CD4-positive, alpha-beta T cell (primary cell): ENCODE measurements at regions of chr3 and their contacts with region 1.

Region 1: GRCh38 chr3:58305882-58306711 is at the starts of genes HTD2 and RPP14:
- DNase-seq: peak; percentile 98 to 100 (median 99)
- ATAC-seq: peak; percentile 87
- H3K4me3 ChIP-seq: peak within 1 kb of the TSS; percentile 81
- H3K4me3 Mint-ChIP-seq: peak within 1 kb of the TSS; percentile 97
- H3K27ac ChIP-seq: peak within 1 kb of the TSS; percentile 91 to 98
- H3K27ac Mint-ChIP-seq: peak within 1 kb of the TSS; percentile 98
- H3K4me1 ChIP-seq: peaks cover 31% of the 10 kb centered on the region
- H3K4me1 Mint-ChIP-seq: peaks cover 35% of the 10 kb centered on the region
- H3K27me3 ChIP-seq: peaks cover 8 to 12% of the 10 kb centered on the region in 2 experiments
- H3K27me3 Mint-ChIP-seq: peaks cover 13% of the 10 kb centered on the region
- CTCF ChIP-seq: peak; percentile 93
- total RNA-seq, gene HTD2: 7.2 to 7.3 TPM
- total RNA-seq, gene RPP14: 17.7 to 19.7 TPM

Region 2: DNA sequence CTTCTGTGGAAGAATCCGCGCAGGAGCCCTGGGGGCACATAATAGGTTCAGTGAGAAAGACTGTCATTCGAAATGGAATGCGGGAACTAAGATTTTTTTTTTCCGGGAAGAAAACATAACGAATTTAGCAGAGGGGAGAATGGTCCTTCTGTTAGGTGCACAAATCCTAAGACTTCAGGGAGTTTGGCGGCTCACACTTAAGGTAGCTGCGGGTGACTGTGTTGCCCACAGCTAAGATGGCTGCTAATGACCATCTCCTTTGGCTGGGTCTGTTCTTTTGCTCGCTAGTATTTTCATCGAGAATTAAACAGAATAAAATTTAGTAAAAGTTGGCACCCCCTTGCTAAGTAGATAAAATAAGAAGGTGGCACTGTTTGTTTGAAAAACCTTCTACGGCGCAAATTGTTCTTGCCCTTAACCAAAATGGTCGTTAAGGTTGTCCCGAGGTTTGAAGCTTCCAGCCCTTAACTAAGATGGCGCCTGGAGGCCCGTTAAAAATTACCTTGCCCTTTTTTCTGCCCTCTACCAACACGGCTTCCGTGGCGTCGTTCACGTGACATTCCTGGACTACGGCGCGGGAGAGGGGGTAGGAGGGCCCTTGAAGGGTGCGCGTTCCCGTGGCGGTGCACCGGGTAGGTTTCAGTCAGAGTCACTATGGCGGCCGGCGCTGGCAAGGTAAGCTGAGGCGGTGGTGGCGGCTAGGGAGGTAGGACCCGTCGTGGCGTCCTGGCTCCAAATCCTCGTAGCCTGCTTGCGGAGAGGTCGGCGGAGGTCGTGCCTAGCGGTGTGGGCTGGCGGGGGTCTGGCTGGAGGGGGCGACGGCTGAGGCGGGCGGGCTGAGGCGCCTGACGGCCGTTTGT is 550.2 kb before region 1 on chr3 and contains the start of gene SLMAP:
- CTCF ChIA-PET with region 1: no interaction called
- POLR2A ChIA-PET with region 1: interaction called, 9 read pairs
- intact Hi-C with region 1: loop called in 1 of 2 experiments (anchors 10 kb)
- DNase-seq: peak; percentile 91 to 98 (median 94)
- ATAC-seq: peak; percentile 92
- H3K4me3 ChIP-seq: peak within 1 kb of the TSS; percentile 72
- H3K4me3 Mint-ChIP-seq: peak within 1 kb of the TSS; percentile 97
- H3K27ac ChIP-seq: peak within 1 kb of the TSS; percentile 82 to 87
- H3K27ac Mint-ChIP-seq: peak within 1 kb of the TSS; percentile 97
- H3K4me1 ChIP-seq: peaks cover 33% of the 10 kb centered on the region
- H3K4me1 Mint-ChIP-seq: peaks cover 46% of the 10 kb centered on the region
- H3K27me3 ChIP-seq: no peaks in the 10 kb centered on the region
- H3K27me3 Mint-ChIP-seq: no peaks in the 10 kb centered on the region
- CTCF ChIP-seq: no peak
- total RNA-seq, gene SLMAP: 51.3 to 52.2 TPM

Region 3: DNA sequence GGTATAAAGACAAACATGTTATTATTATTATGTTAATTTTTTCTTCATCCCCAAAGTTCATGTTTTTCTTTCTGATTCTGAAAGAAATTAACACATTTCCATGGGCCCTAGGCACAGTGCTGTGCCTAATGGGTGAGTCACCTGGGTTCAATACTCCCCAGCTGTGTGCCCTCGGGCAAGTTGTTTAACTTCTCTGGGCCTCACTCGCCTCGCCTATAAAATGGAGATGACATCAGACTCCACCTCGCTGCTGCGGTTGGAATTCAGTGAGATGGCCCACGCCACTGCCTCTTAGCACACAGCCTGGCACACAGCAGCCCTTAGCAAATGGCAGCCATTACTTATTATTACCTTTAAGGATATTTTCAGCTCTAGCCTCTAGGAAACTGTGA is 117.9 kb before region 1 on chr3:
- CTCF ChIA-PET with region 1: interaction called, 10 read pairs
- POLR2A ChIA-PET with region 1: interaction called, 3 read pairs
- intact Hi-C with region 1: loop called in 1 of 2 experiments (anchors 2 kb)
- DNase-seq: no peak
- ATAC-seq: no peak
- H3K4me3 ChIP-seq: no peak overlapping the region
- H3K4me3 Mint-ChIP-seq: no peak overlapping the region
- H3K27ac ChIP-seq: no peak overlapping the region
- H3K27ac Mint-ChIP-seq: no peak overlapping the region
- H3K4me1 ChIP-seq: peaks cover 5% of the 10 kb centered on the region
- H3K4me1 Mint-ChIP-seq: no peaks in the 10 kb centered on the region
- H3K27me3 ChIP-seq: no peaks in the 10 kb centered on the region
- H3K27me3 Mint-ChIP-seq: no peaks in the 10 kb centered on the region
- CTCF ChIP-seq: no peak

Region 4: GRCh38 chr3:58217209-58217811 is 88.8 kb before region 1 on chr3:
- CTCF ChIA-PET with region 1: no interaction called
- POLR2A ChIA-PET with region 1: no interaction called
- intact Hi-C with region 1: no loop called
- DNase-seq: peak; percentile 21 to 80 (median 43)
- ATAC-seq: peak; percentile 93
- H3K4me3 ChIP-seq: no peak overlapping the region
- H3K4me3 Mint-ChIP-seq: no peak overlapping the region
- H3K27ac ChIP-seq: no peak overlapping the region
- H3K27ac Mint-ChIP-seq: no peak overlapping the region
- H3K4me1 ChIP-seq: peaks cover 6% of the 10 kb centered on the region
- H3K4me1 Mint-ChIP-seq: peaks cover 6% of the 10 kb centered on the region
- H3K27me3 ChIP-seq: no peaks in the 10 kb centered on the region
- H3K27me3 Mint-ChIP-seq: no peaks in the 10 kb centered on the region
- CTCF ChIP-seq: peak; percentile 76

Region 5: GRCh38 chr3:58260261-58260731 is 45.8 kb before region 1 on chr3:
- CTCF ChIA-PET with region 1: no interaction called
- POLR2A ChIA-PET with region 1: no interaction called
- intact Hi-C with region 1: no loop called
- DNase-seq: peak in 3 of 14 experiments; percentile 9 to 37 (median 10)
- ATAC-seq: no peak
- H3K4me3 ChIP-seq: no peak overlapping the region
- H3K4me3 Mint-ChIP-seq: no peak overlapping the region
- H3K27ac ChIP-seq: no peak overlapping the region
- H3K27ac Mint-ChIP-seq: no peak overlapping the region
- H3K4me1 ChIP-seq: no peaks in the 10 kb centered on the region
- H3K4me1 Mint-ChIP-seq: no peaks in the 10 kb centered on the region
- H3K27me3 ChIP-seq: no peaks in the 10 kb centered on the region
- H3K27me3 Mint-ChIP-seq: no peaks in the 10 kb centered on the region
- CTCF ChIP-seq: no peak

Region 6: GRCh38 chr3:58332575-58333188 is 26.6 kb after region 1 on chr3 and contains the start of gene PXK:
- CTCF ChIA-PET with region 1: interaction called, 37 read pairs
- POLR2A ChIA-PET with region 1: interaction called, 36 read pairs
- intact Hi-C with region 1: loop called (anchors 1 to 2 kb)
- DNase-seq: peak; percentile 55 to 88 (median 72)
- ATAC-seq: peak; percentile 90
- H3K4me3 ChIP-seq: peak within 1 kb of the TSS; percentile 61
- H3K4me3 Mint-ChIP-seq: peak within 1 kb of the TSS; percentile 99
- H3K27ac ChIP-seq: no peak within 1 kb of the TSS
- H3K27ac Mint-ChIP-seq: peak within 1 kb of the TSS; percentile 73
- H3K4me1 ChIP-seq: peaks cover 23% of the 10 kb centered on the region
- H3K4me1 Mint-ChIP-seq: peaks cover 39% of the 10 kb centered on the region
- H3K27me3 ChIP-seq: no peaks in the 10 kb centered on the region
- H3K27me3 Mint-ChIP-seq: no peaks in the 10 kb centered on the region
- CTCF ChIP-seq: no peak
- total RNA-seq, gene PXK: 12.5 to 14.8 TPM

Region 7: GRCh38 chr3:58422756-58423325 is 116.7 kb after region 1 on chr3:
- CTCF ChIA-PET with region 1: no interaction called
- POLR2A ChIA-PET with region 1: no interaction called
- intact Hi-C with region 1: no loop called
- DNase-seq: no peak
- ATAC-seq: no peak
- H3K4me3 ChIP-seq: no peak overlapping the region
- H3K4me3 Mint-ChIP-seq: no peak overlapping the region
- H3K27ac ChIP-seq: no peak overlapping the region
- H3K27ac Mint-ChIP-seq: peak overlapping the region; percentile 41
- H3K4me1 ChIP-seq: no peaks in the 10 kb centered on the region
- H3K4me1 Mint-ChIP-seq: no peaks in the 10 kb centered on the region
- H3K27me3 ChIP-seq: no peaks in the 10 kb centered on the region
- H3K27me3 Mint-ChIP-seq: no peaks in the 10 kb centered on the region
- CTCF ChIP-seq: no peak

Region 8: DNA sequence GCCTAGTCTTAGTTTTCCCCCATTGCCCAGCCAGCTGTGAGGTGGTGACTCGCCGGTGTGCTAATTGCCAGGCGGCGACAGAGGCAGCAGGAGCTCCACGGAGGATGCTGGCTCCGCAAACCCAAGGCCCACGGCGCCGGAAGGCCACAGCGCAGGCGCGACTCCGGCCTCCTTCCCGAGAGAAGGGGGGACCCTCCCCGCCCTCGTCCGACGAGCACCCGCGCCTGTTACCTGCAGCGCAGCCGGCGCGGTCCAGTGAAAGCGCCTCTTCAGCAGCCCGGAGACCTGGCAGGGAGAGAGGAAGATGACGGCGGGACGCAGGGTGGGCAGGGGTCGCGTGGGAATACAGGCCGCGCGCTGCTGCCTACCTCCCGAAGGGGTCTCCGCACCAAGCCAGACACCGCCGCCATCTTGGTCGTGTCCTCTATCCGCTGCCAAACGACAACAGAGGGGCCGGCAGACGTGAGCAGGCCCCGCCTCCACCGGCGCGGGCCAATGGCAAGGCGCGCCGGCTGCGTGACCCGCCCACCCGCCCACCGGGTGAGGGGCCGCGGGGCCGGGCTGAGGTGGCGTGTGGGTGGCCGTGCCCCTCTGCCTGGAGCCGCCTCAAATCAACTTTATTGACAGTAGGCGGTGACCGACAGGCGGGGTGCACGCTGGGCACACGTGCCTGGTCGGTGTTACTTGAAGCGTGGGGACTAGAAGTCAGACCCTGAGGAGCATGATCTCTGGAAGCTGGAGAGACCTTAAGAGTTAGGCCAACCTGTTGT is 127.5 kb after region 1 on chr3 and contains the start of gene PDHB:
- CTCF ChIA-PET with region 1: interaction called, 12 read pairs
- POLR2A ChIA-PET with region 1: interaction called, 42 read pairs
- intact Hi-C with region 1: loop called in 1 of 2 experiments (anchors 1 kb)
- DNase-seq: peak; percentile 77 to 94 (median 86)
- ATAC-seq: peak; percentile 96
- H3K4me3 ChIP-seq: peak within 1 kb of the TSS; percentile 93
- H3K4me3 Mint-ChIP-seq: peak within 1 kb of the TSS; percentile 90
- H3K27ac ChIP-seq: peak within 1 kb of the TSS; percentile 79 to 85
- H3K27ac Mint-ChIP-seq: peak within 1 kb of the TSS; percentile 86
- H3K4me1 ChIP-seq: peaks cover 20% of the 10 kb centered on the region
- H3K4me1 Mint-ChIP-seq: peaks cover 33% of the 10 kb centered on the region
- H3K27me3 ChIP-seq: no peaks in the 10 kb centered on the region
- H3K27me3 Mint-ChIP-seq: no peaks in the 10 kb centered on the region
- CTCF ChIP-seq: no peak
- total RNA-seq, gene PDHB: 31.1 to 31.5 TPM

Region 9: GRCh38 chr3:58452176-58452575 is 146.1 kb after region 1 on chr3:
- CTCF ChIA-PET with region 1: no interaction called
- POLR2A ChIA-PET with region 1: no interaction called
- intact Hi-C with region 1: no loop called
- DNase-seq: no peak
- ATAC-seq: no peak
- H3K4me3 ChIP-seq: no peak overlapping the region
- H3K4me3 Mint-ChIP-seq: no peak overlapping the region
- H3K27ac ChIP-seq: no peak overlapping the region
- H3K27ac Mint-ChIP-seq: no peak overlapping the region
- H3K4me1 ChIP-seq: peaks cover 2% of the 10 kb centered on the region
- H3K4me1 Mint-ChIP-seq: peaks cover 4% of the 10 kb centered on the region
- H3K27me3 ChIP-seq: no peaks in the 10 kb centered on the region
- H3K27me3 Mint-ChIP-seq: no peaks in the 10 kb centered on the region
- CTCF ChIP-seq: no peak

Region 10: GRCh38 chr3:58532794-58533220 is 226.7 kb after region 1 on chr3:
- CTCF ChIA-PET with region 1: no interaction called
- POLR2A ChIA-PET with region 1: no interaction called
- intact Hi-C with region 1: loop called in 1 of 2 experiments (anchors 1 kb)
- DNase-seq: peak; percentile 60 to 90 (median 70)
- ATAC-seq: peak; percentile 99
- H3K4me3 ChIP-seq: no peak overlapping the region
- H3K4me3 Mint-ChIP-seq: no peak overlapping the region
- H3K27ac ChIP-seq: no peak overlapping the region
- H3K27ac Mint-ChIP-seq: no peak overlapping the region
- H3K4me1 ChIP-seq: peaks cover 8% of the 10 kb centered on the region
- H3K4me1 Mint-ChIP-seq: peaks cover 7% of the 10 kb centered on the region
- H3K27me3 ChIP-seq: no peaks in the 10 kb centered on the region
- H3K27me3 Mint-ChIP-seq: no peaks in the 10 kb centered on the region
- CTCF ChIP-seq: peak; percentile 78